Sigmoid colon (tissue), 7 donors: ENCODE measurements at regions of chr2 and their contacts with region 1.

Region 1: GRCh38 chr2:120825370-120826259 is 89.9 kb downstream of the GLI2 start:
- DNase-seq: peak; percentile 90
- H3K4me3 ChIP-seq: no peak overlapping the region
- H3K27ac ChIP-seq: peak overlapping the region; percentile 56 to 83 (median 79)
- H3K4me1 ChIP-seq: peaks cover 0 to 60% (median 44%) of the 10 kb centered on the region in 4 donors
- H3K27me3 ChIP-seq: no peaks in the 10 kb centered on the region
- CTCF ChIP-seq: no peak
- EP300 ChIP-seq: no peak
- POLR2A ChIP-seq: no peak

Region 2: DNA sequence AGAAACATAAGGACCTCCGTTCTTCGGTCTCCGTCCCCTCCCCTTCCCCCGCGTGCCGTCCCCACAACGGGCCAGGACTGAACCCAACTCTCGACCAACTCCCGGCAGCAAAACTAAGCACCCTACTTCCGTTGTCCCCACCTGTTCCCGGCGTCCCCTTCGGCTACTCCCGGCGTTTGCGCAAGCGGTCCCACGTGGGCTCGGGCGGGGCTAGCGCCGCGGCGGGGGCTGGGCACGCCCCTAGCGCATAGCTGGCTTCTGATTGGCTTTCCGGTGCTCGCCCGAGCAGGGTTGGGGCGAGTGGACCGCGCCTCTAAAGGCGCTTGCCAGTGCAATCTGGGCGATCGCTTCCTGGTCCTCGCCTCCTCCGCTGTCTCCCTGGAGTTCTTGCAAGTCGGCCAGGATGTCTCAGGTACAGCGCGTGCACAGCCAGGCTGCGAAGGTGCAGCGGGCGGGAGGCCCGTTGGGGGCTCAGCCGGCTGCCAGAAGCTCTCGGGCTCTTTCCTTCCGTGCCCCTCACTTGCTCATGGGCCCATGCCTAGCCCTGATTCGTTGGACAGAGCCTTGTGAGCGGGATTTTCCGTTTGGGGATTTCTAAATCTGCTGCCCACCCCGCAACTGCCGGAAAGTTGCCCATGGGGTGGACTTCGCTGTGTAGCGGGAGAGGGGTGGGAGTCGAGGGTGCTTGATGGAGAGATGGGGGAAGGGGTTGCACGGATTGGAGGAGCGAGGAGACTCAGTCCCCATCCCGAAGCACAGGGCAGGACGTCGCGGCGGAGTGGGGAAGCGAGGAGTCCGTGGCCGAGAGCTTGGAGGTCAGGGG is 1458.8 kb before region 1 on chr2 and contains the starts of genes C2orf76 and DBI:
- intact Hi-C with region 1: loop called (anchors 10 kb)
- DNase-seq: peak; percentile 97
- H3K4me3 ChIP-seq: peak within 1 kb of the TSS; percentile 55 to 79 (median 62)
- H3K27ac ChIP-seq: peak within 1 kb of the TSS; percentile 83 to 88 (median 87)
- H3K4me1 ChIP-seq: peaks cover 0 to 30% (median 26%) of the 10 kb centered on the region in 4 donors
- H3K27me3 ChIP-seq: no peaks in the 10 kb centered on the region
- CTCF ChIP-seq: no peak
- EP300 ChIP-seq: peak in 1 of 4 donors; percentile 84
- POLR2A ChIP-seq: peak; percentile 56 to 84
- total RNA-seq, gene C2orf76: 11.1 to 18.2 (median 16.9) TPM
- total RNA-seq, gene DBI: 49.5 to 92.4 (median 70.7) TPM

Region 3: GRCh38 chr2:120867290-120868241 is 42.0 kb after region 1 on chr2:
- intact Hi-C with region 1: loop called (anchors 5 kb)
- DNase-seq: peak; percentile 93
- H3K4me3 ChIP-seq: peak overlapping the region; percentile 35 to 51 (median 46)
- H3K27ac ChIP-seq: peak overlapping the region; percentile 87 to 93 (median 90)
- H3K4me1 ChIP-seq: peaks cover 0 to 54% (median 44%) of the 10 kb centered on the region in 4 donors
- H3K27me3 ChIP-seq: no peaks in the 10 kb centered on the region
- CTCF ChIP-seq: no peak
- EP300 ChIP-seq: no peak
- POLR2A ChIP-seq: peak in 1 of 2 donors; percentile 18

Region 4: DNA sequence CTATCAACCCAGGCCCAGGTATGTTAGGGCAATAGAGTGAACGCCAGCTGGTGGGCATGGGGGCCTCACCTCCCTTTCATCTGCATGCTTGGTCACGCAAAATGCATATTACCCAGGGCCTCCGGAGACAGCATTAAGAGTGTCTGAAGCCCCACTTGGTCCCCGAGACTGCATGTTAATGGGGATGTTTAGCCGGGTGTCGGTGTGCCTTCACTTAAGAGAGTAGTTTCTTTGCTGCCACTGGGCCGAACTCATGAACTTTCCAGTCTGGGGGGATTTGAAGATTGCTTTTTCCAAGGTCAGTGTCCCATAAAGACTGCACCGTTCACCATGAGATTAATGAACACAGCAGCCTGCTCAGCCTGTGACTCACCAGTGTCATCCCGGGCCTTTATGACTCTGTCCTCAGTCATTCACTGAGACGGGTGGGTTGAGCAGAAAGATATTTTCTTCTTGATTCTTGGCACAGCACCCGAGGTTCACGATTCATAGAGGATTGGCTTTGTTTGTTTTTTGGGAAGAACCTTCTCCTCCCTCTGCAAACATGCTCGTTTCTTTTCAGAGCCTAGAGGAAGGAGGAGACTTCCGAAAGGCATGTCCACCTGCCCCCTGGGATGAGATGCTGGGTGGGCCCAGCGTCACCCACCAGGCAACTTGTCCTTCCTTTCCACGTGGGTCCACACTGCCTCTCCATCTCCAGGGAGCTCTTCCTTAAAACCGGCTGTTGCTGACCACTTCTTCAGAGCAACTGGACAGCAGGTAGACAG is 109.1 kb after region 1 on chr2:
- intact Hi-C with region 1: loop called (anchors 1 kb)
- DNase-seq: no peak
- H3K4me3 ChIP-seq: no peak overlapping the region
- H3K27ac ChIP-seq: peak overlapping the region; percentile 76 to 81 (median 79)
- H3K4me1 ChIP-seq: peaks cover 0 to 60% (median 58%) of the 10 kb centered on the region in 4 donors
- H3K27me3 ChIP-seq: no peaks in the 10 kb centered on the region
- CTCF ChIP-seq: no peak
- EP300 ChIP-seq: no peak
- POLR2A ChIP-seq: no peak

Region 5: GRCh38 chr2:121076885-121077549 is 251.4 kb after region 1 on chr2:
- intact Hi-C with region 1: loop called (anchors 10 kb)
- DNase-seq: no peak
- H3K4me3 ChIP-seq: no peak overlapping the region
- H3K27ac ChIP-seq: no peak overlapping the region
- H3K4me1 ChIP-seq: peaks cover 0 to 41% (median 29%) of the 10 kb centered on the region in 4 donors
- H3K27me3 ChIP-seq: peaks cover 0 to 7% (median 0%) of the 10 kb centered on the region in 3 donors
- CTCF ChIP-seq: peak in 3 of 4 experiments; percentile 55 to 78 (median 66)
- EP300 ChIP-seq: no peak
- POLR2A ChIP-seq: no peak